Activated CD4-positive, alpha-beta T cell treated with anti-CD3 and anti-CD28 coated beads for 36 hours (primary cell): ENCODE measurements at regions of chr12 and their contacts with region 1.

Region 1: DNA sequence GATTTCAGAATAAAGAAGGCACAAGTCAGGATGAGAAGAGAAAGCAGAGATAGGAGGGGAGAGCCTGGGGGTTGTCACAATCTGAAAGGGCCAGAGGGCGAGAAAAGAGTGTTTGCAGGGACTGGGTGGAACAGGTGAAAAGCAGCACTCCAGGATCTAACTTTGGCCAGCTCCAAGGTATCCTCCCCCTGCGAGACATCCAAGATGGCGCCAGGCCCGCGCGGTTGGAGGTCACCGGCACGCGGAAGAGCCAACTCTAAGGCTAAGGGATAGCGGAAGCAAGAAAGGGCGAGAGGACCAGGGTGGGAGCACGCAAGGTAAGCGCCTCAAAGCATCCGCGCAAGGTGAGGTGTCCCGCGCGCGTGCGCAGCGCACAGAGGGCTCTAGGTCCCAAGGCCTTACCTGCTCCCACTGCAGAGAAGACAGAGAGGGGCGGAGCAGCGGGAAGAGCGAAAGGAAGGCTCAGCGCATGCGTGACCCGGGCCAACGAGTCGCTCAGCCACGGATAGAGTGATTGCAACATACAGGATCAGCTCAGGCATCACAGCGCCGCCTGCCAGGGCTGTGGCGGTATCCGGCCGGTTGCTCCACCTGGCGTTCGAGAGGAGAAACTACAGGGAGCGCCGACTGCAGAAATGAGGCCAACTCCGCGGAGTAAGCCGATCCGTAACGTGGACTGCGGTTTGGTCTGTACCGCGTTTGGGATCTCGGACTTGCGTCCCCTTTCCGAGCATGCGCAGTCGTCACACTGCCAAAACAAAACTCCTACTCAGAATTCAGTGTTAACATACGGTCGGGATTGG is at the start of gene ATP5MC2:
- DNase-seq: peak; percentile 99
- ATAC-seq: peak; percentile 96
- H3K4me3 Mint-ChIP-seq: peak within 1 kb of the TSS; percentile 93
- H3K27ac Mint-ChIP-seq: peak within 1 kb of the TSS; percentile 95
- H3K4me1 Mint-ChIP-seq: peaks cover 29% of the 10 kb centered on the region
- H3K27me3 Mint-ChIP-seq: peaks cover 20% of the 10 kb centered on the region
- total RNA-seq, gene ATP5MC2: 356 to 415 TPM

Region 2: GRCh38 chr12:53313996-53314395 is 361.9 kb before region 1 on chr12:
- CTCF ChIA-PET with region 1: no interaction called
- POLR2A ChIA-PET with region 1: interaction called, 11 read pairs
- intact Hi-C with region 1: no loop called
- DNase-seq: no peak
- ATAC-seq: no peak
- H3K4me3 Mint-ChIP-seq: no peak overlapping the region
- H3K27ac Mint-ChIP-seq: peak overlapping the region; percentile 19
- H3K4me1 Mint-ChIP-seq: peaks cover 4% of the 10 kb centered on the region
- H3K27me3 Mint-ChIP-seq: no peaks in the 10 kb centered on the region

Region 3: GRCh38 chr12:53451661-53452158 is 224.1 kb before region 1 on chr12 and contains the start of gene PCBP2:
- CTCF ChIA-PET with region 1: no interaction called
- POLR2A ChIA-PET with region 1: no interaction called
- intact Hi-C with region 1: loop called in 1 of 2 experiments (anchors 1 kb)
- DNase-seq: peak; percentile 99
- ATAC-seq: peak; percentile 97
- H3K4me3 Mint-ChIP-seq: peak within 1 kb of the TSS; percentile 94
- H3K27ac Mint-ChIP-seq: peak within 1 kb of the TSS; percentile 96
- H3K4me1 Mint-ChIP-seq: peaks cover 27% of the 10 kb centered on the region
- H3K27me3 Mint-ChIP-seq: no peaks in the 10 kb centered on the region
- total RNA-seq, gene PCBP2: 881 to 999 TPM

Region 4: GRCh38 chr12:53465679-53466078 is 210.2 kb before region 1 on chr12:
- CTCF ChIA-PET with region 1: no interaction called
- POLR2A ChIA-PET with region 1: no interaction called
- intact Hi-C with region 1: no loop called
- DNase-seq: no peak
- ATAC-seq: no peak
- H3K4me3 Mint-ChIP-seq: no peak overlapping the region
- H3K27ac Mint-ChIP-seq: peak overlapping the region; percentile 15
- H3K4me1 Mint-ChIP-seq: peaks cover 30% of the 10 kb centered on the region
- H3K27me3 Mint-ChIP-seq: no peaks in the 10 kb centered on the region

Region 5: DNA sequence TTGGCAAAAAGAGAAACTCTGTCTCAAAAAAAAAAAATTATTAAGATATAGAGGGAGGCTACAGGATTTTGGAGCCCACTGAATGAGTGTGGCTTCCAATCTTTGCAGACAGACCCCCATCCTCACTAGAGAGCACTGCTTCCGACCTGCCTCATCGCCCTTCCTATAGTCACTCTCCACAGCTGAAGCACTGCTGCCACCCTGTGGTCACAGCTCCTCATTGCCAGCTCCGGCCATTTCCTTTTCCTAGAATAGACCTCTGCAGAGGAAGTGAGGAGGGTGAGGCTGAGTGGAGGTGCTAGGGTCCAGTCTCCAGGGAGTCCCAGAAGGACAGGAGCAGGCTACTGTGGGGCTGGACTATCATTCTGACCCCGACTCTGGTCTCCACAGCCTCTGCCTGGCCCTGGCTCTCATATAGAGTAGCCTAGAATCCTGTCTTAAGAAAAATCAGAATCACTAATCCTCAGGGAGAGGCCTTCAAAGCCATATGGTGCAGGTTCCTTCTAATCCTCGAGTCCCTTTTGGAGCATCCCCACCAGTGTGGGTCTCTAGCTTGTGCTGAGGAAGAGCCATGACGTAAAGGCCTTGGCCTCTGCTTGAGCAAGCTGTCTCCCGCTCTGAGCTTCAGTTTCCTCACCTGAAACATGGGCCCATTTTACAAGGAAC is 167.2 kb before region 1 on chr12:
- CTCF ChIA-PET with region 1: interaction called, 10 read pairs
- POLR2A ChIA-PET with region 1: no interaction called
- intact Hi-C with region 1: loop called in 1 of 2 experiments (anchors 2 kb)
- DNase-seq: peak; percentile 92
- ATAC-seq: peak; percentile 99
- H3K4me3 Mint-ChIP-seq: no peak overlapping the region
- H3K27ac Mint-ChIP-seq: peak overlapping the region; percentile 47
- H3K4me1 Mint-ChIP-seq: peaks cover 7% of the 10 kb centered on the region
- H3K27me3 Mint-ChIP-seq: no peaks in the 10 kb centered on the region

Region 6: DNA sequence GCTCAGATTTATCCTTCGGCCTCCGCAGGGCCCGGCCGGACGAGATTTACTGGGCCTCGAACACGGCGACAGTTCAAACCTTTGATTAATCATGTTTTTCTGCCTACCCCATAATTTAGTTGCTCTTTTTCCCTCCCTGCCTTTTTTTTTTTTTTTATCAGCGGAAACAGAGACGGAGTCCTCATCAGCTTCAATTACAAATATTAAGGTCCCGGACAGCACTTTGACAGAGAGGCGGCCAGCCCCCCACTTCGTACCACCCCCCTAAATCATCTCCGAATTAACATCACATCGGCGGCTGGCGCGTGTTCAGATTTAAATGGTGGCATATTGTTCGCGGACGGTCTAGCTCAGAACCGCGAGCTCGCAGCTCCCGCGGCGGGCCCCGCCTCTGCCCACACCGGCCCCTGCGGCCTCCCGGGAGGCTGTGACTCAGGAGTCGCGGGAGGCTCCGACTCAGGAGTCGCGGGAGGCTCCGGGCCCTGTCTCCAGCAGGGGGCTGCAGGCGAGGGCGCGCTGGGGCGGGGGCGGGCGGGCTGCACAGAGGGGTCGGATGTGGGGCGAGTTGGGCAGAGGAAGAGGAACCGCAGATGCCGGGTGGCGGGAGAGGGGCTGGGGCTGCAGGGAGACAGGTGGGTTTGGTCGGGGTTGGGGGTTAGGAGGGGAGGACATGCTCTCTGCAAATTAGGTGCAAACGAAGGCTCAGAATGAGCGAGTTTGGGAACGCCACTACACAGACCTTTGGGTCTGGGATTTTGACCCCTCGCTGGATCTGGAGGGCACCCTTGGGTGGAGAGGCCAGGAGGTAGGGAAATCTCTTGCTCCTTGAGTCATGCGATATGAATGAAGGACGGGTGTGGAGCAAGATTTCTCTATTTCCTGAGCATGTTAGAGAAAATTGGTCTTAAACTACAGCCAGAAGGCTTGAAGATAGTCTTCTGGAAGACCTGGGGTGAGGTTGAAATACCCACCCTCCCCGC is 19.6 kb after region 1 on chr12:
- CTCF ChIA-PET with region 1: interaction called, 44 read pairs
- POLR2A ChIA-PET with region 1: interaction called, 3 read pairs
- intact Hi-C with region 1: loop called in 1 of 2 experiments (anchors 2 kb)
- DNase-seq: peak; percentile 67
- ATAC-seq: peak; percentile 82
- H3K4me3 Mint-ChIP-seq: peak overlapping the region; percentile 53
- H3K27ac Mint-ChIP-seq: peak overlapping the region; percentile 20
- H3K4me1 Mint-ChIP-seq: peaks cover 27% of the 10 kb centered on the region
- H3K27me3 Mint-ChIP-seq: peaks cover 69% of the 10 kb centered on the region

Region 7: GRCh38 chr12:53746592-53747092 is 70.8 kb after region 1 on chr12:
- CTCF ChIA-PET with region 1: interaction called, 47 read pairs
- POLR2A ChIA-PET with region 1: interaction called, 3 read pairs
- intact Hi-C with region 1: loop called in 1 of 2 experiments (anchors 2 kb)
- DNase-seq: peak; percentile 94
- ATAC-seq: peak; percentile 86
- H3K4me3 Mint-ChIP-seq: no peak overlapping the region
- H3K27ac Mint-ChIP-seq: no peak overlapping the region
- H3K4me1 Mint-ChIP-seq: peaks cover 2% of the 10 kb centered on the region
- H3K27me3 Mint-ChIP-seq: peaks cover 38% of the 10 kb centered on the region